Cardiac septum (tissue), 1 donor: ENCODE measurements at regions of chr17 and their contacts with region 1.

Region 1: GRCh38 chr17:49515196-49515770 is 20.2 kb downstream of the NGFR start:
- DNase-seq: peak; percentile 94

Region 2: DNA sequence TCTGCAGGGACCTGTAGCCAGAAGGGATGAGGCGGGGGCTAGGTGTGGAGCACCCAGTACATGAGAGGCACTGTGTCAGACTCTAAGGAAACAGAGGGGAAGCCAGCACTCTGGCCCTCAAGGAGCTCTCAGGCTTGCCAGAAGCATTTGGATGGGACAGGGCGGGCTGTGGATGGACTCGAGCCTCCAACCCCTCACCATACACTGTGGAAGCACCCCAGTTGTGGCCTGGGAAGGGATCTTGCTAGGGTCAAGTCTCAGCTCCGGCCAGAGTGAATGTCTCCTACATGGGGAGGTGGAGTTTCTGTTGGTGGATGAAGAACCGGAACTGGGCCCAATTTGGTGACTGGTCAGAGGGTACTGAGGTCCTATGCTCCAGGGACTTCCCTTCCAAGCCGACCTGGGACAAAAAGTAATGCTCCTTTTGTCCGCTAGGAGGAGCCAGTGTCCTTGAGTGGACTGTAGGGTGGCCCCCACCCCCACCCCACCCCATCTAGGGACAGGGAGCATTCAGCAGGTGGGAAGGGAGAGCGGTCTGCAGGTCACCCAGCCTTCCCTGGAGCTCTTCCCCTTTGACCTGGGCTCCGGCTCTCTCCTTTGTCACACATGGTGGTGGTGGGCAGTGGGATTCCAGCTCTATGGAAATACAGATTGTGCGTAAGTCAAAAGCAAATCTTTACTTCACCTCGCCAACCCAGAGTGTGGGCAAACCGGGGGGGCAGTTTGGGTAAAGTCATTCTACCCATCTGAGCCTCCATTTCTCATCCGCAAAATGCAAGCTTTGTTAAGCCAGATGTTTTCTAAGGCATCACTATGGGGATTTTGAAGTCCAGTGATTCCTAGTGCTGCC is 80.2 kb before region 1 on chr17:
- intact Hi-C with region 1: no loop called
- DNase-seq: no peak

Region 3: GRCh38 chr17:49496183-49496866 is 19.0 kb before region 1 on chr17:
- intact Hi-C with region 1: loop called (anchors 2 kb)
- DNase-seq: peak; percentile 86